CD8-positive, alpha-beta T cell (primary cell): ENCODE measurements at regions of chr10 and their contacts with region 1.

Region 1: GRCh38 chr10:78047314-78047891 is 13.7 kb downstream of the RPS24 start:
- DNase-seq: peak; percentile 69 to 88 (median 81)
- ATAC-seq: peak; percentile 96
- H3K4me3 ChIP-seq: no peak overlapping the region
- H3K4me3 Mint-ChIP-seq: no peak overlapping the region
- H3K27ac ChIP-seq: no peak overlapping the region
- H3K27ac Mint-ChIP-seq: no peak overlapping the region
- H3K4me1 ChIP-seq: peaks cover 9% of the 10 kb centered on the region
- H3K4me1 Mint-ChIP-seq: peaks cover 14% of the 10 kb centered on the region
- H3K27me3 ChIP-seq: no peaks in the 10 kb centered on the region
- H3K27me3 Mint-ChIP-seq: no peaks in the 10 kb centered on the region
- CTCF ChIP-seq: peak; percentile 74

Region 2: GRCh38 chr10:78062296-78062695 is 14.9 kb after region 1 on chr10:
- CTCF ChIA-PET with region 1: interaction called, 20 read pairs
- POLR2A ChIA-PET with region 1: interaction called, 6 read pairs
- intact Hi-C with region 1: no loop called
- DNase-seq: peak in 4 of 9 experiments; percentile 13 to 71 (median 31)
- ATAC-seq: peak; percentile 73
- H3K4me3 ChIP-seq: no peak overlapping the region
- H3K4me3 Mint-ChIP-seq: no peak overlapping the region
- H3K27ac ChIP-seq: no peak overlapping the region
- H3K27ac Mint-ChIP-seq: peak overlapping the region; percentile 15
- H3K4me1 ChIP-seq: peaks cover 17% of the 10 kb centered on the region
- H3K4me1 Mint-ChIP-seq: peaks cover 14% of the 10 kb centered on the region
- H3K27me3 ChIP-seq: no peaks in the 10 kb centered on the region
- H3K27me3 Mint-ChIP-seq: no peaks in the 10 kb centered on the region
- CTCF ChIP-seq: no peak

Region 3: DNA sequence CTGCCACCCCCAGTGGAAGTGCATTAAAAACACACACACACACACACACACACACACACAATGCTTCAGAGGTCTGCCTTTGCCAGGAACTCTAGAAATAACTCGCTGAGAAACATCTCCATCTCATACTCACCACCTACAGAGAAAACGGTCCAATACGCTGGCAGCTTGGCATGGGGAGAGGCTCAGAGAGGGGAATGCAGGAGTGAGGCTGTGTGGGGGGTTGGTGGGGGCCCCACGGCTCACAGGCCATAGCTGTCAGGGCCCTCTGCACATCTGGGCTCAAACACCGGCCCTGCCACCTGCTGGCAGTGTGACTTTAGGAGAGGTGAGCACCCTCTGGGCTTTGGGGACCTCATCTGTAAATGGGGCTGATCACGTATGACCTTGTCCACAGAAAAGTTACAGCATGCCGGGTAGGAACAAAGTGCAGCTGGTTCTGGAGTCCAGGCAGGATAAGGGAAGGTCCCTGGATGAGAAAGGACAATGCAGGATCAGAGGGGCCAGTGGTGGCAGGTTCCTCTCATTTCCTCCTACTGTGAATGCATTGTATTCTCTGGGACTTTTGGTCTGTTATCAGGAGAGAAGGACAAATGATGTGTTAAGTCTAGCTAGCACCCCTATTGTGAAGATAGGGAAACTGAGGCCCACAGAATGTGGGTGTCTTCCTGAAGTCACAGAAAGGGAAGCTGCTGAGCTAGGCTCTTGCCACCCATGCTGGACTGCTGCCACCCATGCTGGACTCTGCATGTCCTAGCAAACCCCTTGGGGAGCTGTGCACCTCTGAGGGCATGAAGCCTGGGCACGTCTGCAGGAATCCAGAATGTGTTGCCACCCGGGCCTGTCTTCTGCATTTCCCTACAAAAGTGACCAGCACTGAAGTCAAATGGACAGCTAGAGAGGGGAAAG is 390.8 kb after region 1 on chr10:
- CTCF ChIA-PET with region 1: interaction called, 3 read pairs
- POLR2A ChIA-PET with region 1: no interaction called
- intact Hi-C with region 1: loop called (anchors 5 kb)
- DNase-seq: peak in 2 of 9 experiments; percentile 14 to 27
- ATAC-seq: no peak
- H3K4me3 ChIP-seq: no peak overlapping the region
- H3K4me3 Mint-ChIP-seq: no peak overlapping the region
- H3K27ac ChIP-seq: no peak overlapping the region
- H3K27ac Mint-ChIP-seq: no peak overlapping the region
- H3K4me1 ChIP-seq: no peaks in the 10 kb centered on the region
- H3K4me1 Mint-ChIP-seq: no peaks in the 10 kb centered on the region
- H3K27me3 ChIP-seq: no peaks in the 10 kb centered on the region
- H3K27me3 Mint-ChIP-seq: peaks cover 2% of the 10 kb centered on the region
- CTCF ChIP-seq: no peak

Region 4: DNA sequence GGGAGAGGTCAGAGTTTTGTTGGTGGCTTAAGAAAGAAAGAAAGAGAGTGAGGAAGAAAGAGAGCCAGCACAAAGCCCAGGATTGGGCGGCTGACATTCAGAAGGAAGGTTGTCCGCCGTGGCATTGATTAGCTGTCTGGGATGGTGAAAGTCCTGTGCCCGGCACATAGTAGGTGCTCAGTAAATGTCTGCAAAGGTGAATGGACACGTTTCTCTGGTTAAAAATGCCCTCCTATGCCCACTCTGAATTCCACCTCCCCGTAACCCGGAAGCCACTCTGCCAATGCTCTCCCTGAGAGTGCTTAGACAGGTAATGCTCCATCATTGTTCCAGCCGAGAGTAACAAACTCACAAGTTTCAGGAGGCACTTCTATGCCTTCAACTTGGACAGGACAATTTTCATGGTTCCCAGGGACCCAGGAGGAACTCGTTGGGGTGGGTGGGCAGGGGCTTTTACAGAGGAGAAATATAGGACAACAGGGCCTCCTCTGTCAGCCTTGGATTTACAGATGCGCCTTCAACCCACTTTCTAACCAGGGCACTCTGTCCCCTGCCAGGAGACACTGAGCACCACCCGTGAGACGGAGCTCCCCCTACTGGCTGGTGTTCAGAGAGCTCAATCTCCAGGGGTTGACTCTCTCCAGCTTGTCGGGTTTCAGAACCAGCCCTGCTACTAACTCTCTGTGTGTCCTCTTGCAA is 609.9 kb after region 1 on chr10:
- CTCF ChIA-PET with region 1: interaction called, 6 read pairs
- POLR2A ChIA-PET with region 1: no interaction called
- intact Hi-C with region 1: loop called in 1 of 2 experiments (anchors 1 kb)
- DNase-seq: peak; percentile 24 to 70 (median 58)
- ATAC-seq: no peak
- H3K4me3 ChIP-seq: no peak overlapping the region
- H3K4me3 Mint-ChIP-seq: no peak overlapping the region
- H3K27ac ChIP-seq: no peak overlapping the region
- H3K27ac Mint-ChIP-seq: no peak overlapping the region
- H3K4me1 ChIP-seq: no peaks in the 10 kb centered on the region
- H3K4me1 Mint-ChIP-seq: no peaks in the 10 kb centered on the region
- H3K27me3 ChIP-seq: no peaks in the 10 kb centered on the region
- H3K27me3 Mint-ChIP-seq: peaks cover 16% of the 10 kb centered on the region
- CTCF ChIP-seq: peak; percentile 36

Region 5: GRCh38 chr10:79202188-79203013 is 1155.0 kb after region 1 on chr10:
- CTCF ChIA-PET with region 1: interaction called, 204 read pairs
- POLR2A ChIA-PET with region 1: no interaction called
- intact Hi-C with region 1: no loop called
- DNase-seq: peak in 6 of 9 experiments; percentile 7 to 50 (median 29)
- ATAC-seq: no peak
- H3K4me3 ChIP-seq: no peak overlapping the region
- H3K4me3 Mint-ChIP-seq: no peak overlapping the region
- H3K27ac ChIP-seq: no peak overlapping the region
- H3K27ac Mint-ChIP-seq: no peak overlapping the region
- H3K4me1 ChIP-seq: no peaks in the 10 kb centered on the region
- H3K4me1 Mint-ChIP-seq: no peaks in the 10 kb centered on the region
- H3K27me3 ChIP-seq: no peaks in the 10 kb centered on the region
- H3K27me3 Mint-ChIP-seq: no peaks in the 10 kb centered on the region
- CTCF ChIP-seq: peak; percentile 22